PC-9 (cell line): ENCODE measurements at regions of chr15 and their contacts with region 1.

Region 1: DNA sequence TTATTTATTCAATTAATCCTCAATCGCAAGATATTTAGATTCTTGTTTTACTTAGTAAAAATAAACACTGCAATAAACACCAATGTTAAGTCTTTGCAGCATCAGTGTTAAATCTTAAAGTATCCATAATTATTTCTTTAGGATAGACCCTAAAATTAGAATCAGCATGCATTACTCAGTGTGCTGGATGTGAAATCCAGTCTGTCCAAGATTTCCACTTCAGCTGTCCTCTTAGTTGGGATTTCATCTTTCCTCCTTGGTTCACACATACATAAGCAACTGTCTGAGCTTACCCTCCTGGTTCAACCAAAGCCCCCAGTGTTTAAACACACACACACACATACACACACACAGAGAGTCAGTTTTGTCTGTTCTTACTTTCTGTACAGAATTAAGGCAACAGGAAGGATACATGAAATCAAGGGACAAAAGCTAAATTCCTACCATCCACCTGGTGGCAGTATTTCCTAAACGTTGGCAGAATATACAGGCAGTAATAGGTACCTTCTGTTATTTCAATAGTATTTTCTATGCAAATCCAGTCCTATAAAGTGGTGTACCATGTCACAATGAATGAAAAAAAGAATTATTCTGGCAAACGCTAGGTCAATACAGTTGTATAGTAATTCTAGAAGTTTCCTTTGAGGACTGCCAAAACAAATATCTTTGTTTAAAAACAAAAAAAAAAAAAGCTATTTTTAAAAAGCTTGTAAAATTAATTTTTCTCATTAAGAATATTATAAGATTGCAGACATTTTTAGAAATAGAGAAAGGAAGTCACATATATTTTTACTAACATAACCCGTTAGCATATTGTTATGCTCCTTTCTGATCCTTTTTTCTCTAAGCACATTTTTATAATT is 27.3 kb upstream of the DMXL2 start:
- DNase-seq: peak; percentile 28 to 41
- H3K4me3 ChIP-seq: no peak overlapping the region
- H3K27ac ChIP-seq: no peak overlapping the region
- H3K4me1 ChIP-seq: no peaks in the 10 kb centered on the region
- H3K27me3 ChIP-seq: no peaks in the 10 kb centered on the region
- CTCF ChIP-seq: peak; percentile 81

Region 2: DNA sequence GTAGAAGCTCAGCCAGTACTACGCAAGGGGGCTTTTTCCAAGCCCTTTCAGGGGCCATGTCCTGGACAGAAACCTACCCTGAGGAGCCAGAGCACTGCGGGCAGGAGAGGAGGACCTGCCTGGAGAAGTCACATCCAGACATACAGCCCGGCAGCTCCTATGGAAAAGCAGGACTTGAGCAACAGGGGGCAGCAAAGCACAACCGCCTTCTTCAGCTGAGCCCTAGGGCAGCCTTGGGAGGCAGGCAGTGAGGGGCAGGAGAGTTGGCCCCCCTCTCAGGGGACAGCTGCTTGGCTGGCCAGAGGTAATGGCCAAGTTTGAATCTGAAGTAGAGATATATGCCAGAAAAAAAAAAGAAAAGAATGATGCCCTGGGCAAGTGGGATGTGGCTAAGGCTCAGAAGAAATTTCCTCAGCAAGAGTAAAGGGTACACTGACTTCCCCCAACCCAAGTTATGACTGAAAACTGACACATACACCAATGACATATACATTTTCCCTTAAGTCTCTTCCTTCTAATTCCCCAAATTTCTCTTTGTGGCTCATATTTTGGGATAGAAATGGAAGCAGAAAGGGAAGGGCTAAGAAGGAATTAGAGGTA is 368.4 kb before region 1 on chr15:
- CTCF ChIA-PET with region 1: no interaction called
- POLR2A ChIA-PET with region 1: no interaction called
- intact Hi-C with region 1: no loop called
- DNase-seq: peak in 1 of 2 experiments; percentile 26
- H3K4me3 ChIP-seq: no peak overlapping the region
- H3K27ac ChIP-seq: no peak overlapping the region
- H3K4me1 ChIP-seq: no peaks in the 10 kb centered on the region
- H3K27me3 ChIP-seq: peaks cover 12% of the 10 kb centered on the region; the same call in 1 of the 2 replicates
- CTCF ChIP-seq: peak; percentile 58; the same call in 1 of the 2 replicates

Region 3: GRCh38 chr15:51776952-51777574 is 127.2 kb after region 1 on chr15:
- CTCF ChIA-PET with region 1: interaction called, 35 read pairs
- POLR2A ChIA-PET with region 1: interaction called, 3 read pairs
- intact Hi-C with region 1: loop called (anchors 1 kb)
- DNase-seq: peak; percentile 57 to 61
- H3K4me3 ChIP-seq: no peak overlapping the region
- H3K27ac ChIP-seq: no peak overlapping the region
- H3K4me1 ChIP-seq: peaks cover 11% of the 10 kb centered on the region
- H3K27me3 ChIP-seq: no peaks in the 10 kb centered on the region
- CTCF ChIP-seq: peak; percentile 72

Region 4: GRCh38 chr15:51907136-51907914 is 257.4 kb after region 1 on chr15:
- CTCF ChIA-PET with region 1: no interaction called
- POLR2A ChIA-PET with region 1: no interaction called
- intact Hi-C with region 1: loop called (anchors 2 kb)
- DNase-seq: peak; percentile 83 to 97
- H3K4me3 ChIP-seq: peak overlapping the region; percentile 26; the same call in 1 of the 2 replicates
- H3K27ac ChIP-seq: peak overlapping the region; percentile 69
- H3K4me1 ChIP-seq: peaks cover 27% of the 10 kb centered on the region
- H3K27me3 ChIP-seq: no peaks in the 10 kb centered on the region
- CTCF ChIP-seq: peak; percentile 60

Region 5: GRCh38 chr15:52227456-52227855 is 577.6 kb after region 1 on chr15:
- CTCF ChIA-PET with region 1: no interaction called
- POLR2A ChIA-PET with region 1: no interaction called
- intact Hi-C with region 1: loop called (anchors 10 kb)
- DNase-seq: peak; percentile 43 to 46
- H3K4me3 ChIP-seq: no peak overlapping the region
- H3K27ac ChIP-seq: no peak overlapping the region
- H3K4me1 ChIP-seq: no peaks in the 10 kb centered on the region
- H3K27me3 ChIP-seq: no peaks in the 10 kb centered on the region
- CTCF ChIP-seq: peak; percentile 73

Region 6: GRCh38 chr15:52735231-52736089 is 1085.6 kb after region 1 on chr15:
- CTCF ChIA-PET with region 1: no interaction called
- POLR2A ChIA-PET with region 1: no interaction called
- intact Hi-C with region 1: loop called (anchors 2 kb)
- DNase-seq: peak; percentile 68 to 69
- H3K4me3 ChIP-seq: no peak overlapping the region
- H3K27ac ChIP-seq: no peak overlapping the region
- H3K4me1 ChIP-seq: peaks cover 13% of the 10 kb centered on the region
- H3K27me3 ChIP-seq: no peaks in the 10 kb centered on the region
- CTCF ChIP-seq: peak; percentile 84